Mammary epithelial cell (primary cell): ENCODE measurements at regions of chr9 and their contacts with region 1.

Region 1: GRCh38 chr9:19379697-19380046 is 364 bp downstream of the RPS6 start:
- DNase-seq: no peak
- H3K4me3 ChIP-seq: peak overlapping the region; percentile 59 to 72 (median 60)
- H3K27ac ChIP-seq: peak overlapping the region; percentile 77
- H3K4me1 ChIP-seq: peaks cover 15% of the 10 kb centered on the region
- H3K27me3 ChIP-seq: no peaks in the 10 kb centered on the region
- CTCF ChIP-seq: no peak

Region 2: DNA sequence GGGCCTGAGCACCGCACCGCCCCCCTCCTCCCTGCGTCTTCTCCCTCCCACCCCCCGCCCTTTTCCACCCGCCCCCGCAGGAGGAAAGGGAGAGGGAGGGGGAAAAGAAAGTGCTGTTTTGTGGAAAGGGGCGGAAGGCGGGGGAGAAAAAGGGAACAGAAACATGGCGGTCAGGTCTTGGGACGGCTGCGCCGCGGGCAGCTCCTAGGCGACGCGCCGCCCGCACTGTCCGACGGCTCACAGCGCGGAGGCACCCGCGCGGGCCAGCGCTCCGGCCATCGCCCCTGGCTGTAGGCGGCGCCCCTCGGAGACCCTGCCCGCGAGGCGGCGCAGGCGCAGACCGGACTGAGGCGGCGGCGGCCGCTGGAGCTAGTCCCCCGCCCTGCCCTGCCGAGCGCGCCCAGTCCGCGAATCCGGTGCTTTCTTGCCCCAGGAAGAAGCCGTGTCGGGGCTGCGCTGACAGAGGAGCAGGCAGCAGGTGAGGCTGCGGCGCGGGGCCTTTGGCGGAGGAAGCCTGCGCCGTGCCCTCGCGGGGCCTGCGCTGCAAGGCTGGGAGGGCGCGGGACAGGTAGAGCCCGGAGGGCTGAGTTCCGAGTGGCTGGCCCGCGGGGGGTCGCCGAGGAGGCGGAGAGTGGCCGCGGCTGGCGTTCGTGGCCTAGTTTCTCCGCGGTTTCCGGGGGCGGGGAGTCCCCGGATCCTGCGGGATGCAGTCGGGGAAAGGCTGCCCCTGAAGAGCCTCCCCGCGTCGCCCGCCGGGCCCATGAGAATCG is 149.1 kb before region 1 on chr9 and contains the start of gene DENND4C:
- CTCF ChIA-PET with region 1: no interaction called
- dilution Hi-C with region 1: loop called (anchors 5 kb)
- in situ Hi-C with region 1: no loop called
- intact Hi-C with region 1: loop called (anchors 10 kb)
- DNase-seq: peak; percentile 85
- H3K4me3 ChIP-seq: peak within 1 kb of the TSS; percentile 74 to 100 (median 94)
- H3K27ac ChIP-seq: peak within 1 kb of the TSS; percentile 91
- H3K4me1 ChIP-seq: peaks cover 9% of the 10 kb centered on the region
- H3K27me3 ChIP-seq: no peaks in the 10 kb centered on the region
- CTCF ChIP-seq: no peak
- total RNA-seq, gene DENND4C: 28.5 to 65.0 TPM

Region 3: DNA sequence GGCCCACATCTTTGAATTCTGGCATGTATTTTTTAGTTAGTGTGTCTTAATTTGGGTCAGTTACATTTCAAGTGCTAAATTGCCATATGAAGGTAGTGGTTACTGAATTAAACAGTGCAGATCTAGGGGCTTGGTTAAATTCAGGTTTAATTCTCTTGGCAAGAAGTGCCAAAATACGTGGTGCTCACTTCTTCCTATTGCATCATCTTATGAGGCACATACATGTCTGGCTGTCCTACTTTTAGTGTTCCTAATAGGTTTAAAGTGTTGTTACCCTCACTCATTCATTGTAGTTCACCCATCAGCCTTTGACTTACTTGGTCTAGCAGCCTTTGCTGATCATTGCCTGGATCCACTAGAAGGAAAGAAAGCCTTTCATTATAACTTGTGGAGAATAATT is 59.2 kb before region 1 on chr9:
- CTCF ChIA-PET with region 1: no interaction called
- dilution Hi-C with region 1: no loop called
- in situ Hi-C with region 1: loop called in 1 of 2 experiments (anchors 10 kb)
- intact Hi-C with region 1: no loop called
- DNase-seq: no peak
- H3K4me3 ChIP-seq: no peak overlapping the region
- H3K27ac ChIP-seq: no peak overlapping the region
- H3K4me1 ChIP-seq: no peaks in the 10 kb centered on the region
- H3K27me3 ChIP-seq: no peaks in the 10 kb centered on the region
- CTCF ChIP-seq: no peak

Region 4: GRCh38 chr9:19408693-19409400 is 29.2 kb after region 1 on chr9 and contains the start of gene ACER2:
- CTCF ChIA-PET with region 1: no interaction called
- dilution Hi-C with region 1: no loop called
- in situ Hi-C with region 1: no loop called
- intact Hi-C with region 1: loop called (anchors 1 kb)
- DNase-seq: peak; percentile 91
- H3K4me3 ChIP-seq: peak within 1 kb of the TSS; percentile 53 to 74 (median 72)
- H3K27ac ChIP-seq: peak within 1 kb of the TSS; percentile 35
- H3K4me1 ChIP-seq: peaks cover 35% of the 10 kb centered on the region
- H3K27me3 ChIP-seq: no peaks in the 10 kb centered on the region
- CTCF ChIP-seq: peak in 1 of 2 donors; percentile 35
- total RNA-seq, gene ACER2: 9.1 to 38.3 TPM

Region 5: DNA sequence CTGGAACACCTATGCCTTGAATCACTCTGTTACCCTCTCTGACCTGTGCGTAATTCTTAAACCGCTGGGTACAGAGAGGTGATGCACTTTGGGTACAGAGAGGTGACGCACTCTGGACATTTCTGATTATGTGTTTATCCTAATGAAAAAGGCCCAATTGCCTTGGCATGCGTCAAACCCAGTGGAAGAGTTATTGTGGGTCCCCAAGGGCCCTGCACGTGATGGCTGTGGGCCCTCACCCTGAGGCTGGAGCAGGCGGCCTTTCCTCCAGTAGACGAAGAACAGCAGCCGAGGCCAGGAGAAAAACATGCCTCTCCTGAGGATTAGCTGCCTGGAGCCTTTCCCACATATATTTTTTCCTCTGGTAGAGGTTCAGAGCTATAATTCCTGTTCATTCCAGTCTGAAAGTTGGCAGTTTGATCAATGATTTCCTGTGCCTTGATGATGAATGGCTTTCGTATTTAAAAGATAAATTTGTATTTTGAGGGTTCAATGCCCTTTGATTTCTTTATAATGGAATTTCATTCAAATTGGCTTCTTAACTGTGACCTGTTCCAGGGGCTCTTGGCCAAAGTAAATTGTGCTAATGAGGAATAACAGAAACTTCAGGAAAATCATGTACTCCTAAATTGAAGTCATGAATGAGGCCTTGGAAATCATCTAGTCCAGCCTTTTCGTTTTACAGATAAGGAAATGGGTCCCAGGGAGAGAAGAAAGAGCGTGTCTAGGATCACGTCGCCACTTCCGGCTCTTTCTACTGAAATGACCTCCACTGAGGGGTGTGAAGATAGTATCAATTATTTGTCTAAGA is 51.9 kb after region 1 on chr9:
- CTCF ChIA-PET with region 1: no interaction called
- dilution Hi-C with region 1: loop called (anchors 10 kb)
- in situ Hi-C with region 1: no loop called
- intact Hi-C with region 1: no loop called
- DNase-seq: no peak
- H3K4me3 ChIP-seq: no peak overlapping the region
- H3K27ac ChIP-seq: no peak overlapping the region
- H3K4me1 ChIP-seq: no peaks in the 10 kb centered on the region
- H3K27me3 ChIP-seq: no peaks in the 10 kb centered on the region
- CTCF ChIP-seq: no peak